MCF 10A (cell line): ENCODE measurements at regions of chr11 and their contacts with region 1.

Region 1: DNA sequence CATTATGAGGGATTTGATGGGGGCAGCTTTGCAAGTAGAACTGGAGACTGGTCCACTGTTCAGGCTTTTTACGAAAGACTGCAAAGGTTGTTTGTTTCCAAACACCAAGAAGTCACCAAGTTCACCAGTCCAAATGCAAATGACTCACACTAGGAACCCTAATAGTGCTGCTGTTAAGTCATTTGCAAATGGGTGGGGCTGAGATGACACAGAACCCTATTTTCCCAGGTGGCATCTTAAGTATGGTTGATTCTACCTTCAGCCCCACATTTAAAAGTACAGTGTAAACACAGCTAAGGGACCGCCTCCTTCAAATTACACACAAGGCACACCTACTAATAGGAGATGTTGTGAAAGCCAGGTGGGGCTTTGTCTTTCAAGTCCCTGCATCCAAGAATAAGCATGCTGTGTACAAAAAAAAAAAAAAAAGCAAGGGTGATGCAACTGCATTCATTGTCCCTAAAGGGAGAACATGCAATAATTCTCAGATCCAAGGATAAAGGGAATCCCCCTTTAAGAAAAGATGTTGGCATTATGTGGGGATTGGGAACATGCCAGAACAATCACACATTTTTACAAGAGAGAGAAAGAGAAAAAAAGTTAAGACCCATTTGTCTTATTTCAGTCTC is 27.3 kb downstream of the BDNF start:
- DNase-seq: peak; percentile 76
- H3K4me3 Mint-ChIP-seq: peak overlapping the region; percentile 49
- H3K27ac Mint-ChIP-seq: peak overlapping the region; percentile 85
- H3K4me1 Mint-ChIP-seq: peaks cover 26% of the 10 kb centered on the region
- H3K27me3 Mint-ChIP-seq: no peaks in the 10 kb centered on the region
- CTCF ChIP-seq: no peak

Region 2: GRCh38 chr11:27506200-27507182 is 166.5 kb before region 1 on chr11 and contains the start of gene LIN7C:
- CTCF ChIA-PET with region 1: no interaction called
- POLR2A ChIA-PET with region 1: interaction called, 19 read pairs
- intact Hi-C with region 1: loop called (anchors 10 kb)
- DNase-seq: peak; percentile 97
- H3K4me3 Mint-ChIP-seq: peak within 1 kb of the TSS; percentile 100
- H3K27ac Mint-ChIP-seq: peak within 1 kb of the TSS; percentile 99
- H3K4me1 Mint-ChIP-seq: peaks cover 44% of the 10 kb centered on the region
- H3K27me3 Mint-ChIP-seq: no peaks in the 10 kb centered on the region
- CTCF ChIP-seq: no peak
- total RNA-seq, gene LIN7C: 47.7 and 50.3 TPM in 2 replicates

Region 3: DNA sequence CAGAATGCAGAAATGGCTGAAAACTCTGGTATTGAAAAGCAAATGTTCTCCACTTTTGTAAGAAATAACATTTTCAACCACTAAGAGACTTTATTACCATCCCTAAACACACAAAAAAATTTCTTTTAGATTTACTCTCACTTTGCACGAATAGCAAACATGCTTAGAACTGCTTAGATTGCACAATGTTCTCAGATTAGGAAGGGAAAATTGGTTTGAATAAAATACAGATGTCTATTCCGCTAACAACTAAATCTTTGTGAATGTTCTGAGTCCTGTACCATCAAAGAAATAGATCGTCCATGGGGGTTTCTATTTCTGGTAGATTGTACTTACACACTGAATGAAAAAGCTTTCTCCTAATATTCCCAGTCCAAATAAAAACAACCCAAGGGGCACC is 12.8 kb before region 1 on chr11:
- CTCF ChIA-PET with region 1: no interaction called
- POLR2A ChIA-PET with region 1: no interaction called
- intact Hi-C with region 1: no loop called
- DNase-seq: no peak
- H3K4me3 Mint-ChIP-seq: no peak overlapping the region
- H3K27ac Mint-ChIP-seq: no peak overlapping the region
- H3K4me1 Mint-ChIP-seq: no peaks in the 10 kb centered on the region
- H3K27me3 Mint-ChIP-seq: no peaks in the 10 kb centered on the region
- CTCF ChIP-seq: no peak